HEK293 (cell line): ENCODE measurements at regions of chr15 and their contacts with region 1.

Region 1: GRCh38 chr15:79184465-79184892 is 93.9 kb upstream of the RASGRF1 start:
- H3K4me3 ChIP-seq: no peak overlapping the region
- H3K27ac ChIP-seq: no peak overlapping the region
- H3K4me1 ChIP-seq: peaks cover 3% of the 10 kb centered on the region
- CTCF ChIP-seq: peak; percentile 79

Region 2: DNA sequence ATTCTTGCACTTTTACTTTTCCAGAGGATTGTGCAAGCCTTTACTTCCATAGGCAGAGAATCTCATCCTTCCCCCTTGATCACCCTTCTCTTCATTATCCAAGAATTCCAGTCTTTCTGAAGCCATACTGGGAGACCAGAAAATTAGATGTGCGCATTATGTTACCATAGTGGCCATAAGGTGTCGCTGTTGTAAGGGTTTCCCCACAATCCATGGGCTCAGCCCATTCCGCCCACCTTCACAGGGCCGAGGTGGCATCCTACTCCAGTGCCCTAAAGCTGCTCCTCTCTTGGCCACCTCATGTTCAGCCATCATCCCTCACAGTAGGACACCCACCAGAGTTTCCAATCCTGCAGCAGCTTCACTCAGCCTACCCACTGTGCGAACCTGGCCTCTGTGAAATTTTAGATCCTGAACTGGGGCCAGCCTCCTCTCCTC is 274.7 kb before region 1 on chr15:
- CTCF ChIA-PET with region 1: interaction called, 97 read pairs
- POLR2A ChIA-PET with region 1: no interaction called
- H3K4me3 ChIP-seq: no peak overlapping the region
- H3K27ac ChIP-seq: no peak overlapping the region
- H3K4me1 ChIP-seq: no peaks in the 10 kb centered on the region
- CTCF ChIP-seq: peak; percentile 58

Region 3: GRCh38 chr15:79028411-79028964 is 156.0 kb before region 1 on chr15:
- CTCF ChIA-PET with region 1: interaction called, 455 read pairs
- POLR2A ChIA-PET with region 1: no interaction called
- H3K4me3 ChIP-seq: no peak overlapping the region
- H3K27ac ChIP-seq: no peak overlapping the region
- H3K4me1 ChIP-seq: no peaks in the 10 kb centered on the region
- CTCF ChIP-seq: peak; percentile 55

Region 4: DNA sequence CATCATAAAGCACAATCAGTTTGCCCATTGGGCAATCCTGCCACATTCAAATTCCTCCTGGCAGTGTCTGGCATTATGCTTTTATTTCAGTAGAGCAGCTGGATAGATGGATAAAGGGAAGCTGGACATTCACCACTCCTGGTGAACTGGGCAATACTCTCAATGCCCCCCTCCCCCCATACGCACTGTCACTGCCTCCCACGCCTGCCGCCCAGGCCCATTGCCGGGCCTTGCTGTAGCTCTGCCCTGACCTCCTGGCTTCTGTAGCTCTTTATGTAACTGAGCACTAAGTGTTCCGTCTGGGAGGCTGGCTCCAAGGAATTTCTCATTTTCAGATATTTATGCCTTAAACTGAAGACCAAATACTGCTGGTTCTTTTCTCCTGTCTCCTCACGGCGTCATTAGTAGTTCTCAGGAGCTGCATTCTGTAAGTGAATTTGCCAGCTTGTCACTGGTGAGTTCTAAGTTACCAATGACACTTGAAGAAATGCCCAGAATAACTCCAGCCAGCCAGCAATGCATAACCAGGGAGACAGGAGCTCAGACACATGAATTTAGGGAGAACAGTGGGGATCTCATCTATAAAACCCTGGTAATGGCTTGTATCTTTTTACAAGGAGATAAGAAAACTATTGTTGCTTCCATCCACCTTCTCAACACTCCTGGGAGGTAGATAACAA is 68.4 kb before region 1 on chr15:
- CTCF ChIA-PET with region 1: interaction called, 11 read pairs
- POLR2A ChIA-PET with region 1: no interaction called
- H3K4me3 ChIP-seq: no peak overlapping the region
- H3K27ac ChIP-seq: no peak overlapping the region
- H3K4me1 ChIP-seq: no peaks in the 10 kb centered on the region
- CTCF ChIP-seq: no peak

Region 5: GRCh38 chr15:79157631-79158592 is 26.6 kb before region 1 on chr15:
- CTCF ChIA-PET with region 1: interaction called, 18 read pairs
- POLR2A ChIA-PET with region 1: no interaction called
- H3K4me3 ChIP-seq: no peak overlapping the region
- H3K27ac ChIP-seq: no peak overlapping the region
- H3K4me1 ChIP-seq: no peaks in the 10 kb centered on the region
- CTCF ChIP-seq: no peak

Region 6: DNA sequence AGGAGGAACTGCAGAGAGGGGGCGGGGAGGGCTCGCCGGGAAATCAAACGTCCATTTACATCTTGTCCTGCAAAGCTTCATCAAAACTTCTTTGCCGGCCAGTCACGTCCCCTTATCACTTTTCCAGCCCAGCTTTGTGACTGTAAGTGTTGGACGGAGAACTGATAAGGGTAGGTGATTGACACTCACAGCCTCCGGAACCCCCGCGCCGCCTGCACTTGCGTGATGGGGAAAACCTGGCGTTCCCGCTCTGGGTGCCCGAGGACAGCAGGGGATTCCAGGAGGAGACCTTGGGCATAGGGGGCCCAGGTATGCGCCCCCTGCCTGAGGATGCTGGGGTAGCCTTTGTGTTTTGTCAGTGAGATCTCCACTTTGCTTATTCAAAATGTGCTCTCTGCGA is 25.2 kb after region 1 on chr15:
- CTCF ChIA-PET with region 1: interaction called, 64 read pairs
- POLR2A ChIA-PET with region 1: no interaction called
- H3K4me3 ChIP-seq: no peak overlapping the region
- H3K27ac ChIP-seq: no peak overlapping the region
- H3K4me1 ChIP-seq: no peaks in the 10 kb centered on the region
- CTCF ChIP-seq: no peak

Region 7: GRCh38 chr15:79233236-79233635 is 48.8 kb after region 1 on chr15:
- CTCF ChIA-PET with region 1: no interaction called
- POLR2A ChIA-PET with region 1: no interaction called
- H3K4me3 ChIP-seq: no peak overlapping the region
- H3K27ac ChIP-seq: no peak overlapping the region
- H3K4me1 ChIP-seq: no peaks in the 10 kb centered on the region
- CTCF ChIP-seq: no peak

Region 8: GRCh38 chr15:79290642-79291275 is 106.3 kb after region 1 on chr15:
- CTCF ChIA-PET with region 1: no interaction called
- POLR2A ChIA-PET with region 1: no interaction called
- H3K4me3 ChIP-seq: no peak overlapping the region
- H3K27ac ChIP-seq: no peak overlapping the region
- H3K4me1 ChIP-seq: no peaks in the 10 kb centered on the region
- CTCF ChIP-seq: no peak